ENCODE measurements at regions of chr9 and their contacts with region 1.

Region 1: DNA sequence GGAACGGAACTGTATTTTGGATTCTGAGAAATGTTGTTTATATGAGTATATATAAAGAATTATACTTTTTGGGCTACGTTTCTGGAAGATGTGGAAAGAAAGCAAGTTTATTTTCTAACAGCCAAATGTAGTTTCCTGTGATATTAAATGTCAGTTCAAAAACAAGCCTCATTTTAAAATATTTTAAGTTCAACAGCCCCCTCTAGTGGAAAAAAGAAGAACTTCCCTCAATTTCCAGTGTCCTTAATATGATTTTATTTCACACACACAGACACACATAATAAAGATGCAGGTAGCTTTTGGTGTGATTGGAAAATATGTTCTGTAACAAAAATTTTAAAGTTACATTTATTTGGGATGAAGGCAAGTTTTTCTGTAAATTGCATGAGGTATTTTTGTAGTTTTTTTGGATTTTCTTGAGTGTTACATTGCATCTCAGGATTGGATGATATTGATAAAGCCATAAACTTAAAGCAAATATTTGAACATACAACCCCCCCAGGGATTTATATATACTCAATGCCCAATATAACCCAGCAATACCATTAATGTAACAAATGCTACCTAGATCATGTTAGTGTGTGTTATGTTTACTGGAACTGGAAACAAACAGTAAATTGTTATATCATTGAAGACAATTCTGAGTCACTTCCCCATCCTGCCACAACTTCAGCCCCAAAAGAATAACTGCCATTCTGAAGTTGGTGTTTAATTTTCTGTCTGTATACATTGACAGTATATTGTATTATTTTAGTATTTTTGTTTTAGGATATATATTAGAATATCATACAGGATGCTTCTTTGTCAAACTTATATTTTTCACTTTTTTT is 54.0 kb downstream of the CCDC171 start:
- DNase-seq: peak in 1 of 4 donors; percentile 7
- ATAC-seq: peak; percentile 27
- H3K4me3 ChIP-seq: no peak overlapping the region
- H3K27ac ChIP-seq: no peak overlapping the region
- H3K4me1 ChIP-seq: no peaks in the 10 kb centered on the region
- H3K27me3 ChIP-seq: no peaks in the 10 kb centered on the region
- CTCF ChIP-seq: peak; percentile 54 to 85 (median 70)
- POLR2A ChIP-seq: no peak

Region 2: GRCh38 chr9:15205632-15206420 is 401.0 kb before region 1 on chr9:
- intact Hi-C with region 1: loop called (anchors 10 kb)
- DNase-seq: no peak
- ATAC-seq: no peak
- H3K4me3 ChIP-seq: no peak overlapping the region
- H3K27ac ChIP-seq: no peak overlapping the region
- H3K4me1 ChIP-seq: no peaks in the 10 kb centered on the region
- H3K27me3 ChIP-seq: no peaks in the 10 kb centered on the region
- CTCF ChIP-seq: no peak
- POLR2A ChIP-seq: no peak

Region 3: DNA sequence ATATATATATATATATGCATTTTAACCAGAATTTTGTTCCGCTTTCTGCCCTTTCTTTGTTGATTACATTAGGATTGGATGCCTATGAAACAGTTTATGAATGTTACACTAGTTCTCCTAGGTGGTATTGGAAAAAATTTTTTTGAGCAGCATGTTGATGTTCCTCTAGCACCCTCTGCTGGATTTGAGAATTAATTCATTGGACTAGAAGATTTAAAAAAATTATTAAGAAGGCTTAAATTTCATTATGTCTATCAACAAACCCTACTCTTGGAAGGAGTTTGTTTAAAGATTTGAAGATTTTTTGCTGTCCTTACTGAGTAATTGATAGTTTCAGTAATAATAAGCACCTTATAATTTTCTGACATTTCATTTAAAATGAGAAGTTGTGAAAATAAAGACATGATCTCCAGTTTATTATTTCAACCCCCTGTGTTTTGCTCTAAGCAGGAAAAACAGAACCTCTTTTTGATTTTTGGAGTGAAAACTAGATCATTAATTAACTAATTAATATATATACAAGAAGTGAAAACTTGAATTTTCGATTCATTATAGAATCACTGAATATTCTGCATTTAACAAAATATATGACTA is 35.6 kb after region 1 on chr9:
- intact Hi-C with region 1: no loop called
- DNase-seq: no peak
- ATAC-seq: no peak
- H3K4me3 ChIP-seq: no peak overlapping the region
- H3K27ac ChIP-seq: no peak overlapping the region
- H3K4me1 ChIP-seq: no peaks in the 10 kb centered on the region
- H3K27me3 ChIP-seq: no peaks in the 10 kb centered on the region
- CTCF ChIP-seq: peak; percentile 15 to 59 (median 44)
- POLR2A ChIP-seq: no peak

Region 4: GRCh38 chr9:15711931-15712330 is 105.1 kb after region 1 on chr9:
- intact Hi-C with region 1: no loop called
- DNase-seq: no peak
- ATAC-seq: no peak
- H3K4me3 ChIP-seq: no peak overlapping the region
- H3K27ac ChIP-seq: no peak overlapping the region
- H3K4me1 ChIP-seq: no peaks in the 10 kb centered on the region
- H3K27me3 ChIP-seq: no peaks in the 10 kb centered on the region
- CTCF ChIP-seq: no peak
- POLR2A ChIP-seq: no peak

Region 5: GRCh38 chr9:15824310-15824709 is 217.5 kb after region 1 on chr9:
- intact Hi-C with region 1: no loop called
- DNase-seq: no peak
- ATAC-seq: no peak
- H3K4me3 ChIP-seq: no peak overlapping the region
- H3K27ac ChIP-seq: no peak overlapping the region
- H3K4me1 ChIP-seq: no peaks in the 10 kb centered on the region
- H3K27me3 ChIP-seq: no peaks in the 10 kb centered on the region
- CTCF ChIP-seq: no peak
- POLR2A ChIP-seq: no peak

Measured in body of pancreas (tissue), 4 donors.